CD8-positive, alpha-beta T cell (primary cell): ENCODE measurements at regions of chr6 and their contacts with region 1.

Region 1: GRCh38 chr6:90044833-90045381 is 150.6 kb downstream of the GJA10 start:
- DNase-seq: no peak
- ATAC-seq: no peak
- H3K4me3 ChIP-seq: no peak overlapping the region
- H3K4me3 Mint-ChIP-seq: no peak overlapping the region
- H3K27ac ChIP-seq: no peak overlapping the region
- H3K27ac Mint-ChIP-seq: no peak overlapping the region
- H3K4me1 ChIP-seq: peaks cover 30% of the 10 kb centered on the region
- H3K4me1 Mint-ChIP-seq: peaks cover 41% of the 10 kb centered on the region
- H3K27me3 ChIP-seq: no peaks in the 10 kb centered on the region
- H3K27me3 Mint-ChIP-seq: no peaks in the 10 kb centered on the region
- CTCF ChIP-seq: no peak

Region 2: DNA sequence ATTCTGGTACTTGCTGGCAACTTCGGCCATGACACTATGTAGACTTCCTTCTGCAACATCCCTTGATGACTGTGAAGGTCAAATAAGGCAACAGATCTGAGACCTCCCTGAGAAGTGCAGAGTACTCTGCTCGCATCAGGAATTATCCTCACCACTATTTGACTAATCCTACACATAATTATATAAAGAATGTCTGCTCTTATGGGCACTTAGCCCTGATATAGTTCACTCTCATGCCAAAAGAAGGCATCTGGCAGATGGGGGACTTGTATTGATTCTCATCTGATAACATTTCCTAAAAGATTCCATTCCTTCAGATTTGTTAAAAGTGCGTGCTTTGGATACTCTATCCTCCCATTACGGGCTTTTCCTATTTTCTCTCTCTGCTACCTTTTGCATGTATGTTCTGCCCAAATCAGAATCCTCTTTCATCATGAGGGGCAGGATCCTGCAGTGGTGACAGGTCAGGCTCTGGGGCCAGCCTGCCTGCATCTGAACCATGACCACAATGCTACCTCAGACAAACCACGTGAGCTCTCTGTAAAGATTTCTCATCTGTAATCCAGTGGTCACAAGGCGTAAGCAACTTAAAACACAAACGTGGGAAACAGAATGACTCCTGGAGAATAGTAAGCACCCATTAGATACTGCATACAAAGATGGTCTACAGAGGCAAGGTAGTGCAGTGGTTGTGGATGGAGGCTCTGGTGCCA is 16.7 kb before region 1 on chr6:
- CTCF ChIA-PET with region 1: no interaction called
- POLR2A ChIA-PET with region 1: no interaction called
- intact Hi-C with region 1: loop called in 1 of 2 experiments (anchors 2 kb)
- DNase-seq: peak in 2 of 9 experiments; percentile 9 to 24
- ATAC-seq: peak; percentile 23
- H3K4me3 ChIP-seq: no peak overlapping the region
- H3K4me3 Mint-ChIP-seq: no peak overlapping the region
- H3K27ac ChIP-seq: no peak overlapping the region
- H3K27ac Mint-ChIP-seq: no peak overlapping the region
- H3K4me1 ChIP-seq: peaks cover 41% of the 10 kb centered on the region
- H3K4me1 Mint-ChIP-seq: peaks cover 79% of the 10 kb centered on the region
- H3K27me3 ChIP-seq: no peaks in the 10 kb centered on the region
- H3K27me3 Mint-ChIP-seq: no peaks in the 10 kb centered on the region
- CTCF ChIP-seq: no peak